ENCODE measurements at regions of chr7 and their contacts with region 1.

Region 1: DNA sequence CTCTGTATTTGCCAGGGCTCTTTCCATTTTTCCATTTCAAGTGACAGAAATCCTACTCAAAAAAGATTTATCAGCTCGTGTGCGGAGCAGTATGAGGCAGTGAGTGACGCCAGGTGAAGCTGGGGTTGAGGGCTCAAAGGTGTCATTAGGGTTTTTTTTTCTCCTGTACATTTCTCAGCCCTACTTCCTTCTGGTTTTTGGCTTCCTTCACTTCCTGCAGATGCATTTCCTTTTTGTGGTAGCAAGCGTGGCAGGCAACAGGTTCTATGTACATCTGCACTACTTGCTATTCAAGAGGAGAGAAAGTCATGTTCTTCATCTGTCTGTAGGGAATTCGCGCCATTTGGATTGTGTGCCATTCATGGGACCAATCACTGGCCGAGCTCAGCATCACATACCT is 52.8 kb upstream of the AOAH start:
- DNase-seq: peak in 8 of 9 experiments; percentile 21 to 93 (median 58)
- ATAC-seq: peak; percentile 69
- H3K4me3 ChIP-seq: peak overlapping the region; percentile 26 to 38
- H3K4me3 Mint-ChIP-seq: peak overlapping the region; percentile 76
- H3K27ac ChIP-seq: peak overlapping the region; percentile 62 to 83
- H3K27ac Mint-ChIP-seq: peak overlapping the region; percentile 98
- H3K4me1 ChIP-seq: peaks cover 75% of the 10 kb centered on the region
- H3K4me1 Mint-ChIP-seq: peaks cover 90% of the 10 kb centered on the region
- H3K27me3 ChIP-seq: no peaks in the 10 kb centered on the region
- H3K27me3 Mint-ChIP-seq: no peaks in the 10 kb centered on the region
- CTCF ChIP-seq: no peak

Region 2: DNA sequence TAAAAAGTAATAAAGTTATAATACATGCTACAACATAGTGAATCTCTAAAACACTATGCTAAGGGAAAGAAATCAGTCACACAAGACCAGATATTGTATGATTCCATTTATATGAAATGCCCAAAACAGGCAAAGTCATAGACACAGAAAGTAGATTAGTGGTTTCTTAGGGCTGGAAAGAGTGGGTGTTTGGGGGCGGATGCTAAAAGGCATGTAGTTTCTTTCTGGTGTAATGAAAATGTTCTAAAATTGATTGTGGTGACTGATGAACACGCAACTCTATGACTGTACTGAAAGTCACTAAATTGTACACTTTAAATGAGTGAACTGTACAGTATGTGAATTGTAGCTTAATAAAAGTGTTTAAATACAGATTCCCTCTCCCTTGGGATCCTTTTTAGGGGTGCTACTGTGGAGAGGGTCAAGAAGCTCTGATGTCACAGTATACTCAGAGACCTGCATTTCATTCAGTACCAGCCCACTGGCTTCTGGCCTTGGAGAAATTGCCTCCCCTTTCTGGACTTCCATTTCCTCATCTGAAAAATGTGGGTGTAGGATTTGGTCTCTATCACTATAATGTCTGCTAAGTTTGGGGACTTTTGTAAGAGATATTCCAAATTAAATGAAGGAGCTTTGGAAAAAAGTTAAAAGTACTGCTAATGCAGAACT is 99.2 kb before region 1 on chr7:
- CTCF ChIA-PET with region 1: interaction called, 3 read pairs
- POLR2A ChIA-PET with region 1: interaction called, 8 read pairs
- intact Hi-C with region 1: loop called in 1 of 2 experiments (anchors 2 kb)
- DNase-seq: peak in 3 of 9 experiments; percentile 31 to 64 (median 32)
- ATAC-seq: peak; percentile 59
- H3K4me3 ChIP-seq: peak overlapping the region in 1 of 2 experiments; percentile 24
- H3K4me3 Mint-ChIP-seq: peak overlapping the region; percentile 70
- H3K27ac ChIP-seq: peak overlapping the region; percentile 15 to 75
- H3K27ac Mint-ChIP-seq: peak overlapping the region; percentile 91
- H3K4me1 ChIP-seq: peaks cover 32% of the 10 kb centered on the region
- H3K4me1 Mint-ChIP-seq: peaks cover 63% of the 10 kb centered on the region
- H3K27me3 ChIP-seq: no peaks in the 10 kb centered on the region
- H3K27me3 Mint-ChIP-seq: no peaks in the 10 kb centered on the region
- CTCF ChIP-seq: no peak

Region 3: GRCh38 chr7:36863901-36864701 is 87.0 kb after region 1 on chr7:
- CTCF ChIA-PET with region 1: no interaction called
- POLR2A ChIA-PET with region 1: no interaction called
- intact Hi-C with region 1: loop called in 1 of 2 experiments (anchors 5 kb)
- DNase-seq: peak; percentile 2 to 82 (median 43)
- ATAC-seq: peak; percentile 61
- H3K4me3 ChIP-seq: no peak overlapping the region
- H3K4me3 Mint-ChIP-seq: peak overlapping the region; percentile 35
- H3K27ac ChIP-seq: peak overlapping the region; percentile 27 to 65
- H3K27ac Mint-ChIP-seq: peak overlapping the region; percentile 79
- H3K4me1 ChIP-seq: peaks cover 8% of the 10 kb centered on the region
- H3K4me1 Mint-ChIP-seq: peaks cover 38% of the 10 kb centered on the region
- H3K27me3 ChIP-seq: no peaks in the 10 kb centered on the region
- H3K27me3 Mint-ChIP-seq: no peaks in the 10 kb centered on the region
- CTCF ChIP-seq: no peak

Region 4: GRCh38 chr7:36969376-36969775 is 192.3 kb after region 1 on chr7:
- CTCF ChIA-PET with region 1: no interaction called
- POLR2A ChIA-PET with region 1: no interaction called
- intact Hi-C with region 1: loop called in 1 of 2 experiments (anchors 2 kb)
- DNase-seq: peak in 6 of 9 experiments; percentile 11 to 70 (median 37)
- ATAC-seq: peak; percentile 87
- H3K4me3 ChIP-seq: no peak overlapping the region
- H3K4me3 Mint-ChIP-seq: no peak overlapping the region
- H3K27ac ChIP-seq: no peak overlapping the region
- H3K27ac Mint-ChIP-seq: peak overlapping the region; percentile 43
- H3K4me1 ChIP-seq: peaks cover 12% of the 10 kb centered on the region
- H3K4me1 Mint-ChIP-seq: peaks cover 42% of the 10 kb centered on the region
- H3K27me3 ChIP-seq: no peaks in the 10 kb centered on the region
- H3K27me3 Mint-ChIP-seq: no peaks in the 10 kb centered on the region
- CTCF ChIP-seq: no peak

Measured in CD8-positive, alpha-beta T cell (primary cell).